Endothelial cell of umbilical vein (primary cell): ENCODE measurements at regions of chr12 and their contacts with region 1.

Region 1: DNA sequence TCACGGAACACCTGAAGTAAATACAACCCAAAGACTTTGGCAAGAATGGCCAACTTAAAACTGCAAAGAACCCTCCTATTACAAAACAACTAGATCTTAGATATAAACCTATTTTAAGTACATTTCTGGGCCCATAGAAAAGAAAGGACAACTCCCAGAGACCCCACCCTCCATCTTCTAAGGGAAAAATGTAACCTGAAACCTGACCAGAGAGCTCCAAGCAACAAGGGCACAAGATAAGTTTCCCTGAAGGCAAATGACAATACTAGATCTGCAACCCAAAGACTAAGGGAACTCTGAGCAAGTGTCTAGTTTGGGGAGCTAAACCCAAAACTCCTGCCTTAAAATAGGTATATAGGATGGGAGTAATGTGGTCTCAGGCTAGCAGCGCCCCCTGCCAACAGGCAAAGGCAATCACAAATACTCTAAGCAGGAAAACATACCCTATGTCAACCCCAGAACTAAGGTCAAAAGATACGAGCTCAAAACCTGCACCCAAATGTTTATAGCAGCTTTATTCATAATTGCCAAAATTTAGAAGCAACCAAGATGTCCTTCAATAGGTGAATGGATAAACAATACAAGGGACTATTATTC is 218.9 kb downstream of the ITPR2 start:
- DNase-seq: peak; percentile 39
- H3K4me3 ChIP-seq: no peak overlapping the region
- H3K27ac ChIP-seq: no peak overlapping the region
- H3K4me1 ChIP-seq: no peaks in the 10 kb centered on the region
- H3K27me3 ChIP-seq: no peaks in the 10 kb centered on the region
- CTCF ChIP-seq: peak; percentile 50 to 52
- POLR2A ChIP-seq: no peak

Region 2: GRCh38 chr12:26097046-26097878 is 516.9 kb before region 1 on chr12:
- CTCF ChIA-PET with region 1: interaction called, 14 read pairs
- POLR2A ChIA-PET with region 1: no interaction called
- dilution Hi-C with region 1: no loop called
- intact Hi-C with region 1: loop called (anchors 1 kb)
- DNase-seq: peak; percentile 76
- H3K4me3 ChIP-seq: no peak overlapping the region
- H3K27ac ChIP-seq: no peak overlapping the region
- H3K4me1 ChIP-seq: no peaks in the 10 kb centered on the region
- H3K27me3 ChIP-seq: no peaks in the 10 kb centered on the region
- CTCF ChIP-seq: peak; percentile 88 to 89
- POLR2A ChIP-seq: no peak

Region 3: GRCh38 chr12:26162905-26163304 is 451.2 kb before region 1 on chr12:
- CTCF ChIA-PET with region 1: no interaction called
- POLR2A ChIA-PET with region 1: no interaction called
- dilution Hi-C with region 1: no loop called
- intact Hi-C with region 1: no loop called
- DNase-seq: no peak
- H3K4me3 ChIP-seq: no peak overlapping the region
- H3K27ac ChIP-seq: no peak overlapping the region
- H3K4me1 ChIP-seq: no peaks in the 10 kb centered on the region
- H3K27me3 ChIP-seq: peaks cover 2 to 4% of the 10 kb centered on the region in 2 experiments
- CTCF ChIP-seq: no peak
- POLR2A ChIP-seq: no peak

Region 4: GRCh38 chr12:26434299-26435068 is 179.6 kb before region 1 on chr12:
- CTCF ChIA-PET with region 1: no interaction called
- POLR2A ChIA-PET with region 1: no interaction called
- dilution Hi-C with region 1: no loop called
- intact Hi-C with region 1: loop called (anchors 10 kb)
- DNase-seq: peak; percentile 69
- H3K4me3 ChIP-seq: no peak overlapping the region
- H3K27ac ChIP-seq: no peak overlapping the region
- H3K4me1 ChIP-seq: no peaks in the 10 kb centered on the region
- H3K27me3 ChIP-seq: no peaks in the 10 kb centered on the region
- CTCF ChIP-seq: peak; percentile 62 to 73
- POLR2A ChIP-seq: no peak

Region 5: GRCh38 chr12:26629864-26630263 is 15.7 kb after region 1 on chr12:
- CTCF ChIA-PET with region 1: interaction called, 11 read pairs
- POLR2A ChIA-PET with region 1: no interaction called
- dilution Hi-C with region 1: no loop called
- intact Hi-C with region 1: no loop called
- DNase-seq: peak; percentile 61
- H3K4me3 ChIP-seq: peak overlapping the region in 1 of 3 experiments; percentile 31
- H3K27ac ChIP-seq: peak overlapping the region; percentile 78
- H3K4me1 ChIP-seq: peaks cover 32% of the 10 kb centered on the region
- H3K27me3 ChIP-seq: no peaks in the 10 kb centered on the region
- CTCF ChIP-seq: peak; percentile 27 to 32
- POLR2A ChIP-seq: no peak